Lower leg skin (tissue), 4 donors: ENCODE measurements at regions of chr12 and their contacts with region 1.

Region 1: DNA sequence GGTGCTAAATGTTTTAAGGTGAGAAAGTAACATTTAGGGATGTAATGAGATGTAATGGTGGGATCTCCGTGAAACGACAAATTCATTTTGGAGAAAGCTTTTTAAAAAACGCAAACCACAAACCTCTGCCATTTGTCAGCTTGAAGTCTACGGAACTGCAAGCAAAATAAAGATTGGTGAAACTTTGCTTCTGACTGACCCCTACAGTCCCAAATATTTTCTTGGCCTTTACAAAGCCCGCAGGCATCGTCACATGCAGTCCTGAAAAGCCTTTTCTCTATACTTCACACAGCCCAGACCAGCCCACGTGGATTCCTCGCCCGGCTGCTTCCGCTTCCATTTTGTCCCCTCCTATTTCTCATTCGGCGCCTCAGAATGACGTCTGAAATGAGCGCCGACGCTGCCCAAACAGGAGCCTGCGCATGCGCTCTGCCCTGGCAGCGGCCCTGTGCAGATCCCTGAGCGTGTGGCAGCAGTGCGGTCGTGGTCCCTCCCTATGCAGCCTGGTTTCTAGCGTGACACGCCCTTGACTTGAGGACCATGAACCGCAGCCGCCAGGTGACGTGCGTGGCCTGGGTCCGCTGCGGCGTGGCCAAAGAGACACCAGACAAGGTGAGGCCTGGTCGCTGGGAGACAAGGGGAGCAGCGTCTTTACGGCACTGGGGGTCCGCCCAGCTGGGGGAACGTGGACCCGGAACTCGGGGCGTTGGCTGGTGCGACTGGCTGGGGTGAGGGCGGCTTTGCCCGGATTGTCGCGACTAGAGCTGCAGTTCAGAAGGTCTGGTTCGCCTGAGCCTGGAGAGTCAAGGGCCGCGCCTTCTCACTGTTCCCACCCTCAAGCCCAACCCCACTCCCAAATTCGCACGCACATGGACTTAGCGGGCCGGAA is at the start of gene PWP1:
- DNase-seq: peak; percentile 91 to 98
- H3K4me3 ChIP-seq: peak within 1 kb of the TSS; percentile 99
- CTCF ChIP-seq: no peak
- POLR2A ChIP-seq: no peak
- total RNA-seq, gene PWP1: 47.2 to 84.9 (median 49.9) TPM

Region 2: DNA sequence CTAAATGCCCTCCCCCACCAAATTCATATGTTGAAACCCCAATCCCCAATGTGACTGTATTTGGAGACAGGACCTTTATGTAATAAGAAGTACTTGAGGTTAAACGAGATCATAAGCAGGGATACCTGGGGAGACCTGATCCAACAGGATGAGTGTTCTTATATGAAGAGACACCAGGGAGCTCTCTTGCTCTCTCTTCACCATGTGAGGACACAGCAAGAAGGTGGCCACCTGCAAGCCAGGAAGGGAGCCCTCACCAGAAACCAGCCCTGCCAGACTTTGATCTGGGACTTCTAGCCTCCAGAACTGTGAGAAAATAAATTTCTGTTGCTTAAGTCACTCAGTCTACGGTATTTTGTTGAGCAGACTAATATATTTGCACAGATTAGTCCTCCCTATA is 1660.5 kb before region 1 on chr12:
- intact Hi-C with region 1: loop called (anchors 5 kb)
- DNase-seq: no peak
- H3K4me3 ChIP-seq: no peak overlapping the region
- CTCF ChIP-seq: no peak
- POLR2A ChIP-seq: no peak

Region 3: GRCh38 chr12:106945261-106945851 is 740.2 kb before region 1 on chr12:
- intact Hi-C with region 1: no loop called
- DNase-seq: no peak
- H3K4me3 ChIP-seq: no peak overlapping the region
- CTCF ChIP-seq: no peak
- POLR2A ChIP-seq: no peak

Region 4: DNA sequence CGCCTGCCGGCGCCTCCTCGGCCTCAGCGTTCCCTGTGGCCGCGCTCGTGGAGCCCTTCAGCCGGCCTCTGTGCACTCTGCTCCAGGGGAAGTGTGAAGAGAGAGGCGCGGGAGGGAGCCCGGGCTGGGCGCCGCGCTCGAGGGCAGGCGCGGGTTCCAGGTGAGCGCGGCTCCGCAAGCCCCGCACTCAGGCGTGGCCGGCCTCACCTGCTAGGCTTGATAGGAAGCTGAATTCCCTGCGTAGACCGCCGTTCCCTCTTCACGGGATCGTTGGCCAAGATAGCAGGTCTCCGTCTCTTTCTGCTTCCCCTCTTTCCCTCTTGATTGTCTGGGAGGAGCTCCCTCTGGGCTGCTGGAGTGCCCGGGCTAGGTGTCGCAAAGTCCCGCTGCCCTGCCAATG is 178.6 kb after region 1 on chr12:
- intact Hi-C with region 1: no loop called
- DNase-seq: no peak
- H3K4me3 ChIP-seq: no peak overlapping the region
- CTCF ChIP-seq: no peak
- POLR2A ChIP-seq: no peak